ENCODE measurements at regions of chr7 and their contacts with region 1.

Region 1: DNA sequence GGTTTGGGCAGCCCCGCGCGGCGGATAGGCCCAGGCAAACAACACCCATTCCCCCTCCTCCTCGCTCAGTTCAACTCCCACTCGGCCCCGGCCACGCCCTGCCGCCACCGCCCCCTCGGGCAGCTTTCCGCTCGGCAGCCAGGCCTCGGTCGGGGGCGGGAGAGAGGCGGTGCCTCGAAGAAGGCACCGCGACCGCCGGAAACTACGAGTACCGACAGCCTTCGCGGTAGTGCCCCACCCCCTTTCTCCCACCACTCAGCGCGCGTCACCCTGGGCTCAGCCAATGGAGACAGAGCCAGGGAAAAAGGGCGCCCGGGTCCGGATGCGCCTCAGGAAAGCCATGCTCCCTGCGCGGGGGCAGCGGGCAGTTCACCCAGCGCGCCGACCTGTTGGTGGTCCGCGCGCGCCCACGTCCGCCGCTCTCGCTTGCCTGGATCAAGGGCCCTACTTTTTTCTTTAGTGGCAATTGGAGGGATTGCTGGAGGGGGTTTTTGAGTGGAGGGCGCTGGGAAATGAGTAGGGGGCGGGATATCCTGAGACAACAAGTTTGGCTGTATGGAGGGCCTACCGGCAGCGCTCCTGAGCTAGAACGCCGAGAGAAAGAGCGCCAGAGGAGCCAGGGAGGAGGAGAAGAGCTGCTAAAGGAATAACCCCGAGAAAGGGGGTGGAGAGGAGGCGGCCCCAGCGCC is 557 bp upstream of the SP4 start:
- DNase-seq: peak; percentile 99
- H3K4me3 Mint-ChIP-seq: peak overlapping the region; percentile 98
- H3K27ac Mint-ChIP-seq: peak overlapping the region; percentile 99
- H3K4me1 Mint-ChIP-seq: peaks cover 37% of the 10 kb centered on the region
- H3K27me3 Mint-ChIP-seq: no peaks in the 10 kb centered on the region

Region 2: DNA sequence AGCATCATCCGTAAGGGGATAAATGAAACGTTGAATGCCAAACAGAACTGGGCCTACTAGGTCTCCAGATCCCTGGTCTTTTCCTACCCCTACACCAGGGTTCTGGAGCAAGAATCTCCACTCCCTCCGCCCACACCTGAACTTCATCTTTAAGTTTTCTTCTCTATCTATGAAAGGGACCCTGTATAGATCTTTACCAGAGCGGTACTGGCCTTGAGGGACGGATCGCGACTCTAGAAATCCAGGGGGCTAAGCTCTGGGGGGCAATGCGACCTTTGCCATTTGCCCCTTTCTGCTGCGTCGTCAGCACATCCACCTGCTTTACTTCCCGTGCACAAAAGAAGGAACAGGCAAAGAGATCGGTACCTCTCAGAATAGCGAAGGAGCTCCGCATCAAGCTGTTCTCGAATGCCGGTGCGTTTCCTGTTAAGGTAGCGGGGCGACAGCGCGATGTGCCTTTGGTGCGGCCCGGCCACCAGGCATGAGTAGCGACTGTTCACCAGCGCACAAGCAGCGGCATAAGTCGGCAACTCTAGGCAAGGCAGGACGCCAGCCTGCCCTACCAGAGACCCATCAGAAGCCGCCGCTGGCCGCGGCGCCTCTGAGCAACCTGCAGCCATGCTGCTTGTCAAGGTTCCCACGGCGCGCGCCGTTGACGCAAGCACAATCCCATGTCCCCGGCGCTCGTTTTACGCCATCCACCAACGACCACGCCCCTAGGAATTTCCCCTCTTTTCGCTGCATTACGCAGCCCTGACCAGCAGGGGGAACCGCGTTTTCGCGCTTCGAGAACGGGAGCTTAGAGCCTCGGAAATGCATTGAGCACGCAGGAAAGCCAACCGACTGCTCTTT is 1718.7 kb before region 1 on chr7 and contains the start of gene POLR1F:
- CTCF ChIA-PET with region 1: no interaction called
- POLR2A ChIA-PET with region 1: no interaction called
- intact Hi-C with region 1: loop called (anchors 2 kb)
- DNase-seq: peak; percentile 96
- H3K4me3 Mint-ChIP-seq: peak within 1 kb of the TSS; percentile 81
- H3K27ac Mint-ChIP-seq: peak within 1 kb of the TSS; percentile 78
- H3K4me1 Mint-ChIP-seq: peaks cover 37% of the 10 kb centered on the region
- H3K27me3 Mint-ChIP-seq: peaks cover 3% of the 10 kb centered on the region
- total RNA-seq, gene POLR1F: 20.0 to 21.9 TPM

Region 3: GRCh38 chr7:21338728-21339164 is 88.6 kb before region 1 on chr7:
- CTCF ChIA-PET with region 1: interaction called, 3 read pairs
- POLR2A ChIA-PET with region 1: interaction called, 14 read pairs
- intact Hi-C with region 1: loop called (anchors 1 kb)
- DNase-seq: peak; percentile 79
- H3K4me3 Mint-ChIP-seq: peak overlapping the region; percentile 31
- H3K27ac Mint-ChIP-seq: peak overlapping the region; percentile 96
- H3K4me1 Mint-ChIP-seq: peaks cover 37% of the 10 kb centered on the region
- H3K27me3 Mint-ChIP-seq: no peaks in the 10 kb centered on the region

Region 4: DNA sequence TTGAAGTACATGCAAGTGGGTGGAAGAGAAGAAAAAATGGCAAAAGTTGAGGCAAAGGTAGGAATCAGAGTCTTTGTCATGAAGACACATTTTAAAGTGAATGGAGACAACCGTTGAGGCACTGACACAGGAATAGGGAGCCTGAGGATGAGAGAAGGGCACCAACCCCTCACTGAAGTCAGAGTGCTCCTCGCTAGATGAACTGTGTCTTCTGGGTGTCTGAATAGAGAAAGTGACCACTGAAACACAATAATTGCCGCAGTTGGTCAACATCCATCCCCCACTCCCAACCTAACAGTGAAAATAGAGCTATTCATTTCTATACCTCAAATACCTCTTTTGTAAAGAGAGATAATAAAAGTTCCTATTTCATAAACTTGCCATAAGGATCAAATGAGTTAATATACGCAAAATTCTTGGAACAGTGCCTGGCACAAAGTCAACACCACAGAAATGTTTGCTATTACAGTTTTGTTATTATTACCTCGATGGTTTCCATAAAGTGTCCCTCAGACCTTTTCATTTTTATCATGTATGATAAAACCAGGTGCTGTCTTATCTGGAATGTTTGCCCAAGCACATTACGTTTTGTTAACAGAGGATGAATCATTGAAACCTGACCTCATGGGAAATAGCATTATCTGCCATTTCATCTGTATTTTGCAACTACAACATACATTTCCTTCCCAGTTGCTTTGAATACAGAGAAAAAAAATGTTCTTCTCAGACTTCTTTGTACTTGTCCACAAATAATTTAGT is 61.3 kb before region 1 on chr7:
- CTCF ChIA-PET with region 1: no interaction called
- POLR2A ChIA-PET with region 1: interaction called, 7 read pairs
- intact Hi-C with region 1: loop called (anchors 1 kb)
- DNase-seq: no peak
- H3K4me3 Mint-ChIP-seq: no peak overlapping the region
- H3K27ac Mint-ChIP-seq: no peak overlapping the region
- H3K4me1 Mint-ChIP-seq: peaks cover 49% of the 10 kb centered on the region
- H3K27me3 Mint-ChIP-seq: peaks cover 3% of the 10 kb centered on the region

Region 5: DNA sequence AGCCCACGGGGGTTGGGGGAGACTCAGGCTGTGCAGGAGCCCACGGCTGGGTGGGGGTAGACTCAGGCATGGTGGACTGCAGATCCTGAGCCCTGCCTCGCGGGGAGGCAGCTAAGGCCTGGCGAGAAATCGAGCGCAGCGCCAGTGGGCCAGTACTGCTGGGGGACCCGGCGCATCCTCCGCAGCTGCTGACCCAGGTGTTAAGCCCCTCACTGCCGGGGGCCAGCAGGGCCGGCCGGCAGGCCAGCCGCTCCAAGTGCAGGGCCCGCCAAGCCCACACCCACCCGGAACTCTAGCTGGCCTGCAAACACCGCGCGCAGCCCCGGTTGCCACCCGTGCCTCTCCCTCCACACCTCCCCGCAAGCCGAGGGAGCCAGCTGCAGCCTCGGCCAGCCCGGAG is 34.0 kb after region 1 on chr7:
- CTCF ChIA-PET with region 1: no interaction called
- POLR2A ChIA-PET with region 1: no interaction called
- intact Hi-C with region 1: no loop called
- DNase-seq: no peak
- H3K4me3 Mint-ChIP-seq: no peak overlapping the region
- H3K27ac Mint-ChIP-seq: no peak overlapping the region
- H3K4me1 Mint-ChIP-seq: peaks cover 14% of the 10 kb centered on the region
- H3K27me3 Mint-ChIP-seq: no peaks in the 10 kb centered on the region

Region 6: GRCh38 chr7:21497072-21497471 is 69.7 kb after region 1 on chr7:
- CTCF ChIA-PET with region 1: no interaction called
- POLR2A ChIA-PET with region 1: no interaction called
- intact Hi-C with region 1: no loop called
- DNase-seq: no peak
- H3K4me3 Mint-ChIP-seq: no peak overlapping the region
- H3K27ac Mint-ChIP-seq: no peak overlapping the region
- H3K4me1 Mint-ChIP-seq: peaks cover 3% of the 10 kb centered on the region
- H3K27me3 Mint-ChIP-seq: no peaks in the 10 kb centered on the region

Region 7: DNA sequence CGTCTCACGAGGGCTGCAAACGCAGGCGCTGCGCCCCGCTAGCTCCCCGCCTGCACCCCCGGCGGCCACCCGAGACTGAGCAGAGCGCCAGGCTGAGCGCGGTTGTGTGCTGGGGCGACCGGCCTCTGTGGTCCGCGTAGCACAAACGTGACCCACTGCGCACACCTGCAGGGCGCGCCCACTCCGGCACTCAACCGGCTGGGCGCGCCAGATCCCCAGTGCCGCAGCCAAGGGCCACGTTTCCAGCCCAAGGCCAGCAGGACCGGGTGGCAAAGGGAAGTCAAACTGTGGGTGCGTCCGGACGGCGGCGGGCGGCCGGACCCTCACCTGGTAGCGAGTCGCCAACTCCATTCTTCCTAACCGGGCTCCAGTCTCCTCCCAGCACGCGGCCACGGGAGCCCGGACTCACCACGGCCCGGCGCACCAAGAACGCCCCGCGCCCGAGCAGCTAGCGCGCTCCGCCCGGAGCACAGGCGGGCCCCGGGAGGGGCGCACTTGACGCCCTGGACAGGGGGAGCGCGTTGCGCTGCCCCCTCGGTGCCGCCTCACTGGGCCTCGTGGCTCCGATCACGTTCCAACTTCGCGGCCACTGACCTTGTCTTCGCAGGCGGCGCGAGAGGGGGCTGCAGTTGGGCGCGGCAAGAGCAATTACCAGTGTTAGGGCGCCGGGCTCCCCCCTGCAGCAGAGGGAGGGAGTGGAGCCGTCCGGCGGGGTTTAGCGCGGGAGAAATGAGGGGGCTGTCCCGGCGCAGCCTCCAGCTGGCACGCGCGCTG is 518.3 kb after region 1 on chr7 and contains the start of gene CDCA7L:
- CTCF ChIA-PET with region 1: no interaction called
- POLR2A ChIA-PET with region 1: interaction called, 3 read pairs
- intact Hi-C with region 1: loop called (anchors 2 kb)
- DNase-seq: peak; percentile 81
- H3K4me3 Mint-ChIP-seq: peak within 1 kb of the TSS; percentile 87
- H3K27ac Mint-ChIP-seq: peak within 1 kb of the TSS; percentile 73
- H3K4me1 Mint-ChIP-seq: peaks cover 54% of the 10 kb centered on the region
- H3K27me3 Mint-ChIP-seq: peaks cover 7% of the 10 kb centered on the region
- total RNA-seq, gene CDCA7L: 62.5 to 70.4 TPM